Activated CD4-positive, alpha-beta T cell treated with anti-CD3 and anti-CD28 coated beads for 36 hours (primary cell): ENCODE measurements at regions of chr7 and their contacts with region 1.

Region 1: DNA sequence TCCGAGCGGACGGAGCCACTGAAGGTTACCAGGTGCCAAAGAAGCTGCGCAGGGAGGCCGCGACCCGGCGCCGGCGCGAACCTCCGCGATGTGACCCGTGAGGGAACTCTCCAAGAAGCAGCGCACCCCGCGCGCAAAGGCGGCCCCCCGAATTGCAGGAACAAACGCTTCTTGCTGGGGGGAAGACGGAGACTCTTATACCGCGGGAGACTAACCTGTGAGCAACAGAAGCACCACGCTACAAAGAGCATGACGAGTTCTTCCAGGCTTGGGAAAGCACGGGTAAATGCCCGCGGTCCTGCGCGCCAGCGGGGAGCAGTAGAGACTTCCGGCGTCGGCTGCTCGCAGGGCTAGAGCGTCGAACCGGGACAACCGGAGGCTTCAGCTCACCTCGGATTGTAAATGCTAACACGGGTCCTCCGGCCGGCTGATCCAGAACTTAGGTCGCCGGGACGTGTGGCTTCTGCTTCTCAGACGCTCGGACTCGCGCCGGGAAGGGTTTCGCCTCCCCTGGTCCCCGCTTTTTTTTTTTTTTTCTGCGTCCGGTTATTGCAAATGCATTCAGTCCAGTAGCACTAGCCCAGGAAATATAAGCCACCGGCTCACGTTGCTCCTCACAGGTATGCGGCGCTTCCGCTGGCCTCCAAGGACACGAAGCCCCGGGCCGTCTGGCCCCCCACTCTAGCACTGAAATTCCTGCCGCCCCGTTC is at the start of gene COA1:
- DNase-seq: peak; percentile 89
- ATAC-seq: peak; percentile 94
- H3K4me3 Mint-ChIP-seq: peak within 1 kb of the TSS; percentile 90
- H3K27ac Mint-ChIP-seq: peak within 1 kb of the TSS; percentile 91
- H3K4me1 Mint-ChIP-seq: peaks cover 36% of the 10 kb centered on the region
- H3K27me3 Mint-ChIP-seq: no peaks in the 10 kb centered on the region
- total RNA-seq, gene COA1: 76.9 to 77.1 TPM

Region 2: GRCh38 chr7:43302211-43302711 is 427.1 kb before region 1 on chr7:
- CTCF ChIA-PET with region 1: no interaction called
- POLR2A ChIA-PET with region 1: no interaction called
- intact Hi-C with region 1: loop called in 1 of 2 experiments (anchors 10 kb)
- DNase-seq: peak; percentile 56
- ATAC-seq: peak; percentile 72
- H3K4me3 Mint-ChIP-seq: no peak overlapping the region
- H3K27ac Mint-ChIP-seq: no peak overlapping the region
- H3K4me1 Mint-ChIP-seq: peaks cover 35% of the 10 kb centered on the region
- H3K27me3 Mint-ChIP-seq: peaks cover 8% of the 10 kb centered on the region

Region 3: DNA sequence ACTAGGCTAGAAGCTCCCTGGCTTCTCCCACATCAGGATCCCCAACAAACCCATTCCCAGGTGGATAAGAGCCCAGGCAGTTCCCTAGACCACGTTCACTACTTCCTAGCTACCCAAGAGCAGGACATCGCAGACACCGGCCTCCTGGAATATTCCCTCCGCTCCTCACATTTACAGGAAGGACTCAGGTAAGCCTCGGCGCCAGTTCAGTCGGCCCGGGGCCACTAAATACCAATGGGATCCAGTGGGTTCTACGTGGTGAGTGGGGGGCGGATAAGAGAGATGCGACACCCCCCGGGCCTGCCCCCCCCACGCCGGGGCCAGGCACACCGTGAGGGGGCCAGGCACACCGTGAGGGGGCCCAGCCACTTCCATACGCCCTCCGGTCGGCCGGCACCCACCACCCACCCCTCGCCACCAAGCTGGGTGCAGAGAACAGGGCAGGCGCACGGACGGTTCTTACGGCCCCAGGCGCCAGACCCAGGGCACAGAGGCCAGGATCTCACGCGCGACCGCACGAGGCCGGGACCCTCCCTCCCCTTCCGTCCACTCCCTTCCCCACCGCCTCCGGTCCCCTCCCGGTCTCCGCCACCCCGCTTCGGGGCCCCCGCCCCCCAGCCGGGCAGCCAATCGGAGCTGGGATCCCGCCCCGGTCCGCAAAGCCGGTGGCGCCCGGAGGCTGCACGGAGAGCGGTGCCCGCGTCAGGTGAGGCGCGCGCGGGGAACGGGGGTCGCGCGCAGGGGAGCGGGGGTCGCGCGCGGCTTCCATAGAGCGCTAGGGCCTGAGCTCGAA is 28.9 kb after region 1 on chr7 and contains the start of gene BLVRA:
- CTCF ChIA-PET with region 1: interaction called, 5 read pairs
- POLR2A ChIA-PET with region 1: no interaction called
- intact Hi-C with region 1: loop called (anchors 1 to 2 kb)
- DNase-seq: peak; percentile 73
- ATAC-seq: peak; percentile 70
- H3K4me3 Mint-ChIP-seq: peak within 1 kb of the TSS; percentile 74
- H3K27ac Mint-ChIP-seq: peak within 1 kb of the TSS; percentile 53
- H3K4me1 Mint-ChIP-seq: peaks cover 42% of the 10 kb centered on the region
- H3K27me3 Mint-ChIP-seq: peaks cover 16% of the 10 kb centered on the region
- total RNA-seq, gene BLVRA: 16.0 to 31.2 TPM

Region 4: DNA sequence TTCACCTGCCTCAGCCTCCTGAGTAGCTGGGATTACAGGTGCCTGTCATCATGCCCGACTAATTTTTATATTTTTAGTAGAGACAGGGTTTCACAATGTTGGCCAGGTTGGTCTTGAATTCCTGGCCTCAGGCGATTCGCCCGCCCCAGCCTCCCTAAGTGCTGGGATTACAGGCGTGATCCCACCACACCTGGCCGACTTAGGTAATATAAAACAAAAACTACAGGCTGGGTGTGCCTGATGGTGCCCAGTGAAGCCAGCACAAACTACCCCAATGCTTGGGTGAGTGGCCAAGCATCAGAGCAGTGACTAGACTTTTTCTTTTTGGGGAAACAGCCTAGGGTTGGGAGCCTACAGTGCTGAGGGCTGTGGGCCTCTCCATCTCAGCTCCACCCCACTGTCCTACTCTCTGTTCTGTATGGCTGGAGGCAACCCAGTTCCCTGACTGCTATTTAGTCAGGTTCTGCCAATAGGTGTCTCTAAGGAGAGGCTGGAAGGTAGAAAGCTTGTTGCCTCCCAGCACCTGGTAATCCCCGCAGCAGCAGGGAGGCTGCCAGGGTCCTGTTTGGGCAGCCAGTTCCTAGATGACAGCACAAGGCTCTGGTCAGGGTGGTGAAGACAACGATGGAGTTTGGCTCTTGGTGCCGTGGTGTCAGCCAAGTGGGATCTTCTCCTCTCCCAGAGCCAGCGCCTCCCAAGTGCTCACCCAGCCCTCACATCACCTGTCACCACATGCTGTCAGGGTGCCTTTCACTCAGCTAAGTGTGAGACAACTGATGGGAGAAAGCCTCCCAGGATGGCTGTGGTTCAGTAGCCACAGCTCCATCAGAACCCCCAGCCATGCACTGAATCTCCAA is 1369.8 kb after region 1 on chr7:
- CTCF ChIA-PET with region 1: no interaction called
- POLR2A ChIA-PET with region 1: no interaction called
- intact Hi-C with region 1: no loop called
- DNase-seq: peak; percentile 3
- ATAC-seq: peak; percentile 49
- H3K4me3 Mint-ChIP-seq: no peak overlapping the region
- H3K27ac Mint-ChIP-seq: no peak overlapping the region
- H3K4me1 Mint-ChIP-seq: no peaks in the 10 kb centered on the region
- H3K27me3 Mint-ChIP-seq: no peaks in the 10 kb centered on the region